CD8-positive, alpha-beta T cell (primary cell): ENCODE measurements at regions of chr10 and their contacts with region 1.

Region 1: DNA sequence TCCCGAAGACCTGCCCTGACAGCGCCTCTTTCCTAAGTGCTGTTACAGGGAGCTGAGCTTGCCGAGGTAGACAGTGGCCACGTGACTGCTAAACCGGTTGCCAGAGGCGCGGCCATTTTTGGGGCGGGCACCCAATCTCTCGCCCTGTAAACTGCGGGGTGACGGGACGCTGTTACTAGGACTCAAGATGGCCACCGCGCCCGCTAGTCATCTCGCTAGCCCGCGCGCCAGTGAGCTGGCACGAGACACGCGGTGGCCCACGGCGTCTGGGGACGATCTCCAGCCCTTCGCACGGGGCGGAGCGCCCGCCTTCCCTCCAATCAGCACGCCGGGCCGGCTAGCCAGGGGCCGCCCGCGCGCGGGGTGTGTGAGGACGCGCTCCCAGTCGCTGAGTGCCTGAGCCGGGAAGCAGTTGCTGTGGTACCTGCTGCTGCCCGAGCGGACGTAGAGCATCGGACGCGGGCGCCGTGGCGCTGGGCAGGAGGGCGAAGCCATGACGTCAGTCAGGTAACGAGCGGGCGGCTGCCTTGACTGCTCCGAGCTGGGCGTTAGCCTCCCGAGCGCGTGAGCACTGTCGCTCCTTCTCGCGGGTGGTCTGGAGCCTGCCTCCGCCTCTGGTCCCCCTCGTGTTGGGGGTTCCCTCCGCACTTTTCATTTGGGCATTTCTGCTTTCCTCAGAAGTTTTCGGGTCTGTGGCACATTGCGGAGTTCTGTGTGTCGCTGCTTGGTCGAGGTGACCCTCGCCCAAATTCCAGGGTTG is 25.5 kb downstream of the ADK start:
- DNase-seq: peak; percentile 89 to 99 (median 96)
- ATAC-seq: peak; percentile 93
- H3K4me3 ChIP-seq: peak overlapping the region; percentile 89 to 91
- H3K4me3 Mint-ChIP-seq: peak overlapping the region; percentile 93
- H3K27ac ChIP-seq: peak overlapping the region; percentile 85 to 89
- H3K27ac Mint-ChIP-seq: peak overlapping the region; percentile 97
- H3K4me1 ChIP-seq: peaks cover 34% of the 10 kb centered on the region
- H3K4me1 Mint-ChIP-seq: peaks cover 42% of the 10 kb centered on the region
- H3K27me3 ChIP-seq: no peaks in the 10 kb centered on the region
- H3K27me3 Mint-ChIP-seq: no peaks in the 10 kb centered on the region
- CTCF ChIP-seq: no peak

Region 2: DNA sequence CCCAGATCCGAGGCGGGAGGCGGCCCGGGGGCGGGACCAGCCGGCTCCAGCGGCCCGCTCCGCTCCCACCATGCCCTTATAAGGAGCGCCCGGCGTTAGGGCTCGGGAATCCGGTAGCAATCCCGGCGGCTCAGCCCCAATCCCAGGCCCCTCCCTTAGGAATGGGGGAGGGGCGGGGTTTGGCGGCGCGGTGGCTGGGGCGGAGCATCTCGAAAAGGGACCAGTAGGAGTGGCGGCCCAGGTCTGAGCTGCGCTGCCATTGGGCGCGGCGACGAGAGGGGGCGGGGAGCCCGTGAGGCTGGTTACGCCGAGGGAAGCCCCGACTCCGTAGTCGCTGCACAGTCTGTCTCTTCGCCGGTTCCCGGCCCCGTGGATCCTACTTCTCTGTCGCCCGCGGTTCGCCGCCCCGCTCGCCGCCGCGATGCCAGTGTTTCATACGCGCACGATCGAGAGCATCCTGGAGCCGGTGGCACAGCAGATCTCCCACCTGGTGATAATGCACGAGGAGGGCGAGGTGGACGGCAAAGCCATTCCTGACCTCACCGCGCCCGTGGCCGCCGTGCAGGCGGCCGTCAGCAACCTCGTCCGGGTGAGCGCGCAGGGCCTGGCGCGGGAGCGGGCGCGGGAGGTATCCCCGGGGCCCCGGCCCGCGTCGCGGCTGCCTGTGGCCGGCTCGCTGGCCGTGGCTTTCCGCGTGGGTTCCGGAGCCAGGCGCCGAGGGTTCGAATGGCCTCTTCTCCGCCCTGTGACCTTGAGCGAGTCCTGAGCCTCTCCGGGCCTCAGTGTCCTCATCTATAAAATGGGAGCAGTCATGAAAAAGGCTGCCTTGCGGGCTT is 178.6 kb before region 1 on chr10 and contains the start of gene VCL:
- CTCF ChIA-PET with region 1: no interaction called
- POLR2A ChIA-PET with region 1: no interaction called
- intact Hi-C with region 1: loop called in 1 of 2 experiments (anchors 5 kb)
- DNase-seq: peak; percentile 91 to 97 (median 95)
- ATAC-seq: peak; percentile 96
- H3K4me3 ChIP-seq: peak within 1 kb of the TSS; percentile 82
- H3K4me3 Mint-ChIP-seq: peak within 1 kb of the TSS; percentile 100
- H3K27ac ChIP-seq: peak within 1 kb of the TSS; percentile 63
- H3K27ac Mint-ChIP-seq: peak within 1 kb of the TSS; percentile 96
- H3K4me1 ChIP-seq: peaks cover 32% of the 10 kb centered on the region
- H3K4me1 Mint-ChIP-seq: peaks cover 45% of the 10 kb centered on the region
- H3K27me3 ChIP-seq: no peaks in the 10 kb centered on the region
- H3K27me3 Mint-ChIP-seq: no peaks in the 10 kb centered on the region
- CTCF ChIP-seq: no peak
- total RNA-seq, gene VCL: 6.6 to 9.4 TPM

Region 3: GRCh38 chr10:74139981-74140380 is 36.6 kb before region 1 on chr10:
- CTCF ChIA-PET with region 1: no interaction called
- POLR2A ChIA-PET with region 1: no interaction called
- intact Hi-C with region 1: no loop called
- DNase-seq: no peak
- ATAC-seq: no peak
- H3K4me3 ChIP-seq: no peak overlapping the region
- H3K4me3 Mint-ChIP-seq: no peak overlapping the region
- H3K27ac ChIP-seq: no peak overlapping the region
- H3K27ac Mint-ChIP-seq: no peak overlapping the region
- H3K4me1 ChIP-seq: peaks cover 2% of the 10 kb centered on the region
- H3K4me1 Mint-ChIP-seq: peaks cover 11% of the 10 kb centered on the region
- H3K27me3 ChIP-seq: no peaks in the 10 kb centered on the region
- H3K27me3 Mint-ChIP-seq: no peaks in the 10 kb centered on the region
- CTCF ChIP-seq: no peak

Region 4: GRCh38 chr10:74189999-74190421 is 13.4 kb after region 1 on chr10:
- CTCF ChIA-PET with region 1: interaction called, 5 read pairs
- POLR2A ChIA-PET with region 1: interaction called, 30 read pairs
- intact Hi-C with region 1: loop called (anchors 1 to 2 kb)
- DNase-seq: peak in 5 of 9 experiments; percentile 24 to 65 (median 42)
- ATAC-seq: peak; percentile 48
- H3K4me3 ChIP-seq: peak overlapping the region in 1 of 2 experiments; percentile 4
- H3K4me3 Mint-ChIP-seq: peak overlapping the region; percentile 49
- H3K27ac ChIP-seq: peak overlapping the region; percentile 33 to 73
- H3K27ac Mint-ChIP-seq: peak overlapping the region; percentile 90
- H3K4me1 ChIP-seq: peaks cover 34% of the 10 kb centered on the region
- H3K4me1 Mint-ChIP-seq: peaks cover 67% of the 10 kb centered on the region
- H3K27me3 ChIP-seq: no peaks in the 10 kb centered on the region
- H3K27me3 Mint-ChIP-seq: no peaks in the 10 kb centered on the region
- CTCF ChIP-seq: no peak